ENCODE measurements at regions of chr7 and their contacts with region 1.

Region 1: DNA sequence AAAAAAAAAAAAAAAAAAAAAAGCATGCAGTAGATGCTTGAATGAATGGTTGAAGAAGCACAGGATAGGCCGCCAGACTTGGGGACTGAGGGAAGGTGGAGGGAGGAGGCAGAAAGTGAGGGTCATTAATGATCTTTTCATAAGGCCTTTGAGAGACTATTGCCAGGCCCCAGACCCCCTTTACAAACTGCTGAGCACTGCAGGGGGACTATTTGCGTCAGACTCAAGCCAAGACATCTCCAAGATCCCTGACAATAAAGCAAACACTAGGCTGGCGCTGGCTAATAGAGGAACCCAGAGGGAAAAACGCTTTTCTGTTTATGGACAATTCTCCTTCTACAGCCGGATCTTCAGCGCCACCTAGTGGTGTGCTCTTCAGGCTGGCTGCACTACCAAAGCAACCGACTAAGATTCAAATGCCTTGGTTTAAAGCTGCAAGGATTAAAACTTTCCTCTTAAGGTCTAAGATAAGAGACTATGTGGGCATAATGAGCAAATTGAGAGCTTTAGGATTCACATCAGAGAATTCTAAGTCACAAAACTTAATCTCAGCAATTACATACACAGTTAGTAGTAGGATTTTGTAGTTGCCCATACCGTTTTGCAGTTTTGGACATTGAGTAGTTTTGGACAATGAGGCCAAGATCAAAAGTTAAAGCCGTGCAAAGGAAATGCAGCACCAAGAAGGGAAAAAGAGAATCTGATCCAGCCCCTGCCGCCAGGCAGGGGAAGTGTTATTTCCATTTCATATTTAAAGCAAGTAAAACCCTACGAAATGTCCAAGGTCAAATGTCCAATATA is 17.9 kb upstream of the AGK start:
- DNase-seq: peak; percentile 24
- H3K4me3 ChIP-seq: no peak overlapping the region
- CTCF ChIP-seq: peak; percentile 87

Region 2: GRCh38 chr7:141333459-141333858 is 199.9 kb before region 1 on chr7:
- CTCF ChIA-PET with region 1: no interaction called
- POLR2A ChIA-PET with region 1: no interaction called
- DNase-seq: no peak
- H3K4me3 ChIP-seq: no peak overlapping the region
- CTCF ChIP-seq: no peak

Region 3: GRCh38 chr7:141522657-141523342 is 10.5 kb before region 1 on chr7:
- CTCF ChIA-PET with region 1: interaction called, 15 read pairs
- POLR2A ChIA-PET with region 1: no interaction called
- DNase-seq: no peak
- H3K4me3 ChIP-seq: no peak overlapping the region
- CTCF ChIP-seq: no peak

Region 4: DNA sequence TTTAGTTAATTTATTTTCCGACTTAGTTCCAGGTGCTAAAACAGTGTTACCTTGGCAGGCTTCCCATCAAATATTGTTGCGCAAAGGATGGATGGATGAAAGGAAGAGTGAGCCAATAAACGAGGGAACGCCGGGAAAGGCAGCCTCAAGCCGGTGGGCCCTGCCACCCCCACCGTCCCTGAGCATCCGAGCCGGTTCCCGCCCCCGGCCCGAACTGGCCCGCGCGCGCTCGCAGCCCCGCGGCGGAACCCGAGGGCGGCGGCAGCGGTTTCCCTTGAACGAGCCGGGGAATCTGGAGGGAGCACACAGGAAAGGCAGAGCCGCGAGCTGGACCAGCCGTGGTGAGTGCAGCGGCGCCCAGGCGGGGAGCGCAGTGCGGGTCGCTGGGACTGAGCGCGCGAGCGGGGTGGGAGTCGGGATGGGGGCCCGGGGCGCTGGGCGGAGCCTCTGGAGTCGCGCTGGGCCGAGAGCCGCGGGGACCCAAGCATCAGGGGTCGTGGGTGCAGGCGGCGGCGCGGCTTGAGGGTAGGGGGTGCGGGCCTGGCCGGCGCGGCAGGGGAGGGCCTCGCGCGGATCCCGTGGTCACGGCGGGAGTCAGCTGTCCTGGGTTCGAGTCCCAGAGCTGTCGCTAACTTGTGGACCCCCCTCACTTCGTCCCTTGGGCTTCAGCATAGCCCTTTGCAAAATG is 17.9 kb after region 1 on chr7 and contains the start of gene AGK:
- CTCF ChIA-PET with region 1: interaction called, 38 read pairs
- POLR2A ChIA-PET with region 1: no interaction called
- DNase-seq: no peak
- H3K4me3 ChIP-seq: peak within 1 kb of the TSS; percentile 86
- CTCF ChIP-seq: no peak

Region 5: GRCh38 chr7:141884539-141885225 is 351.3 kb after region 1 on chr7:
- CTCF ChIA-PET with region 1: no interaction called
- POLR2A ChIA-PET with region 1: no interaction called
- DNase-seq: no peak
- H3K4me3 ChIP-seq: no peak overlapping the region
- CTCF ChIP-seq: no peak

Region 6: DNA sequence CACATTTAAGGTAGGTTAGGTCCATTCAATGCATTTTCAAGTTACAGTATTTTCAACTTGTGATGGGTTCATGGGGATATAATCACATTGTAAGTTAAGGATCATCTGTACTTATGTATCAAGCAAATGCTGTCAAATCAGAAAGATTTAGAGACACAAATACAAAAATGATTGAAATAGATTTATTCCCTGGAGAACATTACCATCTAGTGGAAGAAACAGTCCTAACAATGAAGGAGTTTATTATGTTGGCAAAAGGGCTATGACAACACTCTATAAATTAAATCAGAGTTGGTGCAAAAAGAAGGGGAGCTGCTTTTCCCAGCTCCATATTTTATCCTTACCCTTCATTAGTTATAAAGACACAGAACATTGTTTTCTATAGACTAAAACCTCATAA is 655.5 kb after region 1 on chr7:
- CTCF ChIA-PET with region 1: no interaction called
- POLR2A ChIA-PET with region 1: no interaction called
- DNase-seq: no peak
- H3K4me3 ChIP-seq: no peak overlapping the region
- CTCF ChIP-seq: no peak